CD14-positive monocyte (primary cell): ENCODE measurements at regions of chr17 and their contacts with region 1.

Region 1: GRCh38 chr17:51666971-51667704 is 406.8 kb downstream of the UTP18 start:
- DNase-seq: no peak
- H3K4me3 ChIP-seq: no peak overlapping the region
- H3K4me3 Mint-ChIP-seq: no peak overlapping the region
- H3K27ac ChIP-seq: no peak overlapping the region
- H3K27ac Mint-ChIP-seq: no peak overlapping the region
- H3K4me1 ChIP-seq: no peaks in the 10 kb centered on the region
- H3K4me1 Mint-ChIP-seq: no peaks in the 10 kb centered on the region
- H3K27me3 ChIP-seq: no peaks in the 10 kb centered on the region
- H3K27me3 Mint-ChIP-seq: peaks cover 0 to 5% (median 2%) of the 10 kb centered on the region in 3 donors
- CTCF ChIP-seq: no peak

Region 2: DNA sequence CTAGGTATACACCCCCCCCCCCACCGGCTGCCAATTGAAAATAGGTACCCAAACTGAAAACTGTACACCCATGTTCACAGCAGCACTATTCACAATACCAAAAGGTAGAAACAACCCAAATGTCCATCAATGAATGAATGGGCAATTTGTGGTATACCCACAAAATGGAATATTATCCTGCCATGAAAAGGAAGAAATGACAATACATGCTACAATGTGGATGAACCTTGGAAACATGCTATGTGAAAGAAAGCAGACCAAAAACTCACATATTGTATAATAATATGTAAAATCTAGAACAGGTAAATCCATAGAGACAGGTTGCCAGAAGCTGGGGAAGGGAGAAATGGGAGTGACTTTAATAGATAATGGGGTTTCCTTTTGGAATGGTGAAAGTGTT is 10.7 kb after region 1 on chr17:
- intact Hi-C with region 1: loop called in 1 of 2 experiments (anchors 1 kb)
- DNase-seq: no peak
- H3K4me3 ChIP-seq: no peak overlapping the region
- H3K4me3 Mint-ChIP-seq: no peak overlapping the region
- H3K27ac ChIP-seq: no peak overlapping the region
- H3K27ac Mint-ChIP-seq: no peak overlapping the region
- H3K4me1 ChIP-seq: no peaks in the 10 kb centered on the region
- H3K4me1 Mint-ChIP-seq: no peaks in the 10 kb centered on the region
- H3K27me3 ChIP-seq: no peaks in the 10 kb centered on the region
- H3K27me3 Mint-ChIP-seq: peaks cover 0 to 3% (median 2%) of the 10 kb centered on the region in 3 donors
- CTCF ChIP-seq: no peak